ENCODE measurements at regions of chr13 and their contacts with region 1.

Region 1: GRCh38 chr13:43878892-43879754 is at the start of gene CCDC122:
- DNase-seq: no peak
- ATAC-seq: peak; percentile 85
- H3K4me3 ChIP-seq: peak within 1 kb of the TSS; percentile 57 to 59
- H3K27ac ChIP-seq: peak within 1 kb of the TSS; percentile 68
- H3K4me1 ChIP-seq: peaks cover 2 to 23% of the 10 kb centered on the region in 2 experiments; a peak in 2 of 4 replicates
- H3K27me3 ChIP-seq: no peaks in the 10 kb centered on the region
- CTCF ChIP-seq: no peak
- POLR2A ChIP-seq: no peak
- RAD21 ChIP-seq: no peak
- total RNA-seq, gene CCDC122: 5.8 TPM

Region 2: GRCh38 chr13:42594970-42595571 is 1284.1 kb before region 1 on chr13:
- CTCF ChIA-PET with region 1: no interaction called
- POLR2A ChIA-PET with region 1: no interaction called
- RAD21 ChIA-PET with region 1: no interaction called
- intact Hi-C with region 1: loop called (anchors 2 kb)
- DNase-seq: peak; percentile 51
- ATAC-seq: peak; percentile 82
- H3K4me3 ChIP-seq: no peak overlapping the region
- H3K27ac ChIP-seq: no peak overlapping the region
- H3K4me1 ChIP-seq: no peaks in the 10 kb centered on the region
- H3K27me3 ChIP-seq: peaks cover 45% of the 10 kb centered on the region
- CTCF ChIP-seq: peak; percentile 38 to 90 (median 78); a peak in 5 of 6 replicates
- POLR2A ChIP-seq: no peak
- RAD21 ChIP-seq: peak; percentile 65

Region 3: DNA sequence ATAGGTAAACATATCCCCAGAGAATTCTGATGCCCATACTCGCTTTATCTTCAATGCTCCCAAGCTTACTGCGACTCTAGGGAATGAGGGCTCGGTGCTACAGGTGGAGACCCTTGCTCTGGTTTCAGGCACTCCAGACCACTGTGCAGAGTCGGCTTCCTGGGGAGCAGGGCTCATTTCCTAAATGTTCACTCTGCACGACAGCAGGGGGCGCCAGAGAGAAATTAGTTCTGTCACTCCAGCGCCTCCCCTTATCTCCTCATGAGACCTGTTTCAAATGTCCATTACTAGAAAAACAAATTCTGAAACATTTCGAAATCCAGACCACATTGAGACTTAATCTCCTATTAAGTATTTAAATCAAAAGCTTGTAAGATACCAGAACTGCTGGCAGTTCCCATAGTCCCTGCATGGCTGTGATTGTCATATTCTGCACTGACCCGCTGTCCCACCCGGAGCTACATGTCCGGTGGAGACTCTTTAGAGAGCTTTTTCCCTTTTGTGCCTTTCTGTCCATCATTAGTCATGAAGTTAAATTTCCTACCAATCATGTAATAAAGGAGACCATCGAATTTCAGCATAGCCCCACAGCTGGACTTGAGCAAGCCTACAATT is 909.5 kb before region 1 on chr13:
- CTCF ChIA-PET with region 1: no interaction called
- POLR2A ChIA-PET with region 1: no interaction called
- RAD21 ChIA-PET with region 1: no interaction called
- intact Hi-C with region 1: loop called (anchors 10 kb)
- DNase-seq: peak; percentile 42
- ATAC-seq: peak; percentile 93
- H3K4me3 ChIP-seq: no peak overlapping the region
- H3K27ac ChIP-seq: no peak overlapping the region
- H3K4me1 ChIP-seq: peaks cover 4 to 12% of the 10 kb centered on the region in 2 experiments; a peak in 3 of 4 replicates
- H3K27me3 ChIP-seq: no peaks in the 10 kb centered on the region
- CTCF ChIP-seq: peak; percentile 68 to 84 (median 83)
- POLR2A ChIP-seq: no peak
- RAD21 ChIP-seq: peak; percentile 57

Region 4: GRCh38 chr13:43085545-43085944 is 793.6 kb before region 1 on chr13:
- CTCF ChIA-PET with region 1: no interaction called
- POLR2A ChIA-PET with region 1: no interaction called
- RAD21 ChIA-PET with region 1: no interaction called
- intact Hi-C with region 1: loop called (anchors 5 kb)
- DNase-seq: peak; percentile 16
- ATAC-seq: 0 out of 2 replicates have a peak, but pooled peaks have one; percentile 34
- H3K4me3 ChIP-seq: no peak overlapping the region
- H3K27ac ChIP-seq: no peak overlapping the region
- H3K4me1 ChIP-seq: no peaks in the 10 kb centered on the region
- H3K27me3 ChIP-seq: no peaks in the 10 kb centered on the region
- CTCF ChIP-seq: peak; percentile 17 to 69 (median 32); a peak in 4 of 6 replicates
- POLR2A ChIP-seq: no peak
- RAD21 ChIP-seq: peak; percentile 51

Region 5: DNA sequence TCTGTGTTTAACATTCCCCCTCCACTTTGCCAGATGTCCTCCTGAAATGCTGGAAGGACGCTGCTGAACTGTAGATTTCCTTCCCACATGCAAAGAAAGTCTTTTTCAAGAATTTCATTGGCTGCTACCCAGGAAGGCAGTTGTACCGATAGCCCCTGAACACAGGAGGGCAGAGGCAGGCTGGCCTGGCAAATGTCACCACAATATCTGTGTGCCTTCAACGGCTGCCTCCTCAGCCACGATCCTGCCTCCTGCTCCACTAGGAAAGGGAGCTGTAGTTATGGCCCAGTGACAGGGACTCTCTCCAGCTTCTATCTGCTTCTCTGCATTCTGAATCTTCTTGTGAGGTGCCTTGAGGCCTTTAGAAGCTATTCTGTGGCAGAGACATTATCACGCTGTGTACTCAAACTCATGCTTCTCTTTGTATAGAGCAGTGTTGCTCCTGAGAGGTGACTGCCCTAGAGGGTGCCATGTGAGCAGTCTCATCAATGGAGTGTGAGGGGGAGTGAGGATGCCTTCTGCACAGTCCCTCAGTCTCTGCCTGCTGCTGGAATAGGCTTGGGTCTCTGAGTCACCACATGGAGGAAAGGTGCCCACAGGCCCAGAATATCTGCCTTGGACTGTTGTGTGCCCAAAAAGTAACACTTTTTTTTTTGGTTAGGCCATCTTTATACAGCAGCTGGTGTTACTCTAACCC is 575.9 kb before region 1 on chr13:
- CTCF ChIA-PET with region 1: no interaction called
- POLR2A ChIA-PET with region 1: no interaction called
- RAD21 ChIA-PET with region 1: no interaction called
- intact Hi-C with region 1: loop called (anchors 5 kb)
- DNase-seq: no peak
- ATAC-seq: peak; percentile 86
- H3K4me3 ChIP-seq: no peak overlapping the region
- H3K27ac ChIP-seq: no peak overlapping the region
- H3K4me1 ChIP-seq: no peaks in the 10 kb centered on the region
- H3K27me3 ChIP-seq: no peaks in the 10 kb centered on the region; the same call in 1 of the 2 replicates
- CTCF ChIP-seq: peak; percentile 17 to 51 (median 41); a peak in 4 of 6 replicates
- POLR2A ChIP-seq: no peak
- RAD21 ChIP-seq: peak; percentile 61